Mammary epithelial cell (primary cell): ENCODE measurements at regions of chr5 and their contacts with region 1.

Region 1: GRCh38 chr5:13553896-13554295 is 390.6 kb downstream of the DNAH5 start:
- DNase-seq: peak; percentile 41
- H3K4me3 ChIP-seq: no peak overlapping the region
- H3K27ac ChIP-seq: no peak overlapping the region
- H3K4me1 ChIP-seq: no peaks in the 10 kb centered on the region
- H3K27me3 ChIP-seq: no peaks in the 10 kb centered on the region
- CTCF ChIP-seq: no peak

Region 2: GRCh38 chr5:13488254-13488931 is 65.5 kb before region 1 on chr5:
- CTCF ChIA-PET with region 1: no interaction called
- dilution Hi-C with region 1: no loop called
- in situ Hi-C with region 1: no loop called
- intact Hi-C with region 1: no loop called
- DNase-seq: no peak
- H3K4me3 ChIP-seq: no peak overlapping the region
- H3K27ac ChIP-seq: no peak overlapping the region
- H3K4me1 ChIP-seq: no peaks in the 10 kb centered on the region
- H3K27me3 ChIP-seq: no peaks in the 10 kb centered on the region
- CTCF ChIP-seq: no peak

Region 3: DNA sequence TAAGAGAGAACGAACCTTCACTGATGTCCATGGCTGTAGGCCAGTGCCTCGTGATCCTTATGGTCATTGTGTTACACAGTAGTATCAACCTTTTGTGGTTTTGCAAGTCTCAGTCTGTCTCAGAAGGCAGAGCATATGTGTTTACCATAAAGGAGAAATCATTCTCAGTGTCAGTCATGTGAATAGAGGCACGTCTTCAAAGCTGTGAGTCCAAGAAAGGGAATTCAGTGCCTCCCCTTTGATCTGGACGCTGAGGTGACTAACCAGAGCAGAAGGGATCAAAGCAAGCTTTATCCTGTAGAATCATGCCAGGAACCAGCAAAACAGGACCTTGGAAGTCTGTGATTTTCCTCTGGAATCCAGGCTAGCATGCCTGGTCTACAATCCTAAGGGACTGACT is 43.3 kb before region 1 on chr5:
- CTCF ChIA-PET with region 1: no interaction called
- dilution Hi-C with region 1: loop called (anchors 5 kb)
- in situ Hi-C with region 1: no loop called
- intact Hi-C with region 1: loop called (anchors 5 kb)
- DNase-seq: peak; percentile 96
- H3K4me3 ChIP-seq: no peak overlapping the region
- H3K27ac ChIP-seq: peak overlapping the region; percentile 81
- H3K4me1 ChIP-seq: peaks cover 37% of the 10 kb centered on the region
- H3K27me3 ChIP-seq: no peaks in the 10 kb centered on the region
- CTCF ChIP-seq: no peak

Region 4: DNA sequence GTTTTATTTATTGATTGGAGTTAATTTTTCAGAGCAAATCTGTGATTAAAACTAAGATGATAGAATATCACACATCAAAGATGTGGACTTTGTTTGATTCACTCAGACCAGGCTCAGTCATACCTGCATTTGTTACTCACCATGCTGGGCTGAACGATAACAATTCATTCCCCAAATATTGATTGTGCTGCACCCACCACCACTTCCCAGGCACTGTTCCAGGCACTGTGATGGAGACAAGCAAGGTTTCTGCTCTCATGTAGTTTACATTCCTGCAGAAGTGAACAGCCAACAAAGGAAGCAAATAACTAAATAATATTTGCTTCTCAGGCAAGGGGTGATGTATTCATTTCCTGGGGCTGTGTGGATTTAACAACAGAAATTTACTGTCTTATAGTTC is 37.7 kb before region 1 on chr5:
- CTCF ChIA-PET with region 1: no interaction called
- dilution Hi-C with region 1: loop called (anchors 5 kb)
- in situ Hi-C with region 1: no loop called
- intact Hi-C with region 1: loop called (anchors 5 kb)
- DNase-seq: no peak
- H3K4me3 ChIP-seq: no peak overlapping the region
- H3K27ac ChIP-seq: no peak overlapping the region
- H3K4me1 ChIP-seq: peaks cover 8% of the 10 kb centered on the region
- H3K27me3 ChIP-seq: no peaks in the 10 kb centered on the region
- CTCF ChIP-seq: no peak

Region 5: DNA sequence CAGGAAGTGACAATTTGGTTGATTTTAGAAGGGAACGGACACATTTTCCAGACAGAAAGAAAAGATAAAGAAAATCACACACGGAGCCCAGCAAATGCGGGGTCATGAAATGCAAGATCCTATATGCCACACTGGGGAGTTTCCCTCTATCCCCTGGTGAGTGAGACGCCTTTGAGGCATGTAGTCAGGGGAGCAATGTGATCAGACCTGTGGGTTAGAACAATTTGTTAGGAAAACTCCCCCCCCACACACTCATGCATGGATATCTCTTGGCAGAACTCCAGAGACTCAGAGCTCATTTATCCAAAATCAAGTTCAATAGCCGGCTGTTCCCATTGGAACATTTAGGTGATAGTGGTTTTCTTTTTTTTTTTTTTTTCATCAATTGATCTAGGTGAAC is 517.5 kb after region 1 on chr5:
- CTCF ChIA-PET with region 1: no interaction called
- dilution Hi-C with region 1: no loop called
- in situ Hi-C with region 1: no loop called
- intact Hi-C with region 1: no loop called
- DNase-seq: peak; percentile 62
- H3K4me3 ChIP-seq: no peak overlapping the region
- H3K27ac ChIP-seq: no peak overlapping the region
- H3K4me1 ChIP-seq: peaks cover 7% of the 10 kb centered on the region
- H3K27me3 ChIP-seq: no peaks in the 10 kb centered on the region
- CTCF ChIP-seq: no peak